ENCODE measurements at regions of chr7 and their contacts with region 1.

Region 1: DNA sequence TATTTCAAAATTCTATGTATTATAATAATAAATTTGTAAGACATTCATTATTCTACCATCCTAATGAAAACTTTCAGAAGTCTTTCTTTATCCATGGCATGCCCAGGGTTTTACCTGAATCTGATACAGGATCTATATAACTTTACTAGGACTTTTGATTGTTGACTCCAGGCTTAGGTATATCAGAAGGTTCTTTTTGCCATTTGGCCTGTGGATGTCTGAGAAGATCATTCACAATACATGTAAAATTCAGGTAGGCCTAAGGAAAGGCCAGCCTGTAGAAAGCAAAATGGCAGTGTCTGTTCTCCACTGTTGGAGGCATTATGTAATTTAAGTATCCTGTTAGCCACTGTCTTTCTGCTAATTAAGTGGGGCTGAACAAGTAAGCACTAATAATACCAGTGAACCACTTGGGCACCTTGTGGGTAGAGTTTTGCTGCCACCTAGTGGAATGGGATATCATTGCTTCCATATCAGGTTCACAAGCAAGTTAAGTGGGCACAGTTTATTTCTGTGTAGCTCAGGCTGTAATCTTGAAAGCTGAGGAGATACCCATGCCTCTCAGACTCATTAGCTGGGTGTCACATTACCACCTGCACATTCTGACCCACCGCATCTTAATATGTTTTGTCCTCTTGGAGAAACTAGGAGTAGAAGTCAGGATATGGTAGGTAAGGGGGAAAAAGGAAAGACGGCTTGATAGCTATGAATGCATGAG is 105.5 kb downstream of the SEPTIN7 start:
- DNase-seq: peak in 1 of 2 donors; percentile 27
- ATAC-seq: peak; percentile 87 to 96 (median 92)
- H3K4me3 ChIP-seq: no peak overlapping the region
- H3K27ac ChIP-seq: peak overlapping the region; percentile 7
- H3K4me1 ChIP-seq: peaks cover 4% of the 10 kb centered on the region
- H3K27me3 ChIP-seq: no peaks in the 10 kb centered on the region
- CTCF ChIP-seq: peak; percentile 93

Region 2: GRCh38 chr7:35681231-35682029 is 224.9 kb before region 1 on chr7:
- intact Hi-C with region 1: no loop called
- DNase-seq: no peak
- ATAC-seq: no peak
- H3K4me3 ChIP-seq: no peak overlapping the region
- H3K27ac ChIP-seq: no peak overlapping the region
- H3K4me1 ChIP-seq: peaks cover 7% of the 10 kb centered on the region
- H3K27me3 ChIP-seq: no peaks in the 10 kb centered on the region
- CTCF ChIP-seq: no peak

Region 3: DNA sequence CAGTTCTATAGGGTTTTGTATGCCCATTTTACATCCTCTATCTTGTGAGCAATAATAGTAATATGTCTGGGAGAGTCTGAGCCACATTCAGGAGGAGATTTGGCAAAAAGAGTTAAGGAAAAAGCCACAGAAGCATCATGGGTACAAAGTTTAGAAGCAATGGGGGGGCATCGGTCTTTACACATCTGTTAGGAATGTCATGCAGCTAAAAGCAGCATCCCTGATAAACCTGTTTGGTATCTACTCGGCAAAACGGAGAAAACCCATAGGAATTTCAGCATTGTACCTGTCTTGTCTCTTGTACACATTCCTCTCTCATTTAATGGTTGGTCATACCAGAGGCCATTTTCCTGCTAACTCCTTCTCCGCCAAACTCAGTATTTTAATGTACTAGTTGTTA is 198.9 kb before region 1 on chr7:
- intact Hi-C with region 1: loop called (anchors 1 to 2 kb)
- DNase-seq: no peak
- ATAC-seq: no peak
- H3K4me3 ChIP-seq: no peak overlapping the region
- H3K27ac ChIP-seq: no peak overlapping the region
- H3K4me1 ChIP-seq: peaks cover 6% of the 10 kb centered on the region
- H3K27me3 ChIP-seq: no peaks in the 10 kb centered on the region
- CTCF ChIP-seq: no peak

Region 4: DNA sequence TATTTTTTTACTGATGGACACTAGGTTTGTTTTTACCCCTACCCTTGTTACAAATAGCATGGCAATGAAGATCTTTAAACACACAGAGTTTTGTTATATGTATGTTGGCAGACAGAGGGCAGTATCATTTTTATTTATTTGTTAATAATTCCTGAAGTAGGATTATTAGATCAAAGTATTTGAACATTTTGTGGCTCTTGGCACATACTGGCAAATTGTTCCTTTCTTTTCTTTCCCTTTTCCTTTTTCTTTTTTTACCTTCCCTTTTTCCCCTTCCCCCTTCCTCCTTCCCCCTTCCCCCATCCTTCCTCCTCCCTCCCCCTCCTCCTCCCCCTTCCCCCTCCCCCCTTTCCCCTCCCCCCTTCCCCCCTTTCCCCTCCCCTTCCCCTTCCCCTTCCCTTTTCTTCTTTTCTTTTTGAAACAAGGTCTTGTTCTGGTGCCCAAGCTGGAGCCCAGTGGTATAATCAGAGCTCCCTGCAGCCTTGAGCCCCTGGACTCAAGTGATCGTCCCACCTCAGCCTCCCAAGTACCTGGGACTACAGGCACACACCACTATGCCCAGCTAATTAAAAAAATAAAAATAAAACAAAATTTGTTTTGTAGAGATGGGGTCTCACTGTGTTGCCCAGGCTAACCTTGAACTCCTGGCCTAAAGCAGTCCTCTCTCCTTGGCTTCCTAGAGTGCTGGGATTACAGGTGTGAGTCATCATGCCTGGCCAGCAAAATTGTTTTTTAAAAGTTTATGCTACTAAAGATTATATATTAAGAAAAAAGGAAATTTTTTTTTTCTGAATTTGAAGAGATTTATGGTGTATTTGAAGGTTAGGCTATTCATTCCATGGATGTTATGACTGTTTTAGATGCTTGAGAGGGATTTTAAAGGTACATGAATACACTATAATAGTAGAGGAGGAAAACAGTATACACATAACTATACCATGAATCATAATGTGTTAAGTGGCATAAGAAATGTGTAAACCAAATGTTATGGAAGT is 66.2 kb before region 1 on chr7:
- intact Hi-C with region 1: no loop called
- DNase-seq: no peak
- ATAC-seq: no peak
- H3K4me3 ChIP-seq: no peak overlapping the region
- H3K27ac ChIP-seq: no peak overlapping the region
- H3K4me1 ChIP-seq: peaks cover 6% of the 10 kb centered on the region
- H3K27me3 ChIP-seq: no peaks in the 10 kb centered on the region
- CTCF ChIP-seq: no peak

Region 5: DNA sequence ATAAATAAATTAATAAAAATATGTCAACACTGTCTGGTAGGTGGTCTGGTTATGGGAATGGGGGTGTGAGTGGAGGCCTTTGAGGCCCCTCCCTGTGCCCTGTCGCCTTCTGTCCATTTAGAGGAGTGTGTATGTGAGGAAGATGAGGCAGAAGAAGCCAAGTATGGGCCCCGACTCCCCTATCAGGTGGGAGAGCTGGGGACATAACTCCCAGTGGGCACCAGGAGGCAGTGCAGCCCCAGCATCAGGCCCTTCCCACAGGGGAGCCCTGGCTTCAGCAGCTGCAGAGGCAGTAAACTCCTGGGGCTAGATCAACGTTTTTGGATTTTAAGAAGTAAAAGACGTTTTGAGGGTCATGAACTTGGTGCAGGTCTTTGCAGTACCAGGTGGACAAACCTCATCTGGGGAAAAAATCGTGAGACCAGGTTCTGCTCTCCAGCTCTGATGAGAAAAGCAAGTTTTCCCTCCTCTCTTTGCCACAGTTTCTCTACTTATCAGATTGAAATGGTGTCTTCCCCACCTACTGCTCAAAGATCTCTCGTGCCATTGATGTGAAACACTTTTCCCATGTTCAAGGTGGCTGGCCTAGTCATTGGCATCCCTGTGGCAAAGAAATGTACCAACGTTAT is 78.9 kb after region 1 on chr7:
- intact Hi-C with region 1: no loop called
- DNase-seq: peak; percentile 79 to 90
- ATAC-seq: peak; percentile 89 to 96 (median 91)
- H3K4me3 ChIP-seq: no peak overlapping the region
- H3K27ac ChIP-seq: no peak overlapping the region
- H3K4me1 ChIP-seq: peaks cover 19% of the 10 kb centered on the region
- H3K27me3 ChIP-seq: no peaks in the 10 kb centered on the region
- CTCF ChIP-seq: peak; percentile 90

Region 6: GRCh38 chr7:36312344-36313334 is 406.3 kb after region 1 on chr7:
- intact Hi-C with region 1: loop called in 1 of 2 experiments (anchors 10 kb)
- DNase-seq: no peak
- ATAC-seq: no peak
- H3K4me3 ChIP-seq: no peak overlapping the region
- H3K27ac ChIP-seq: no peak overlapping the region
- H3K4me1 ChIP-seq: no peaks in the 10 kb centered on the region
- H3K27me3 ChIP-seq: no peaks in the 10 kb centered on the region
- CTCF ChIP-seq: no peak